PC-3 (cell line): ENCODE measurements at regions of chr1 and their contacts with region 1.

Region 1: GRCh38 chr1:19096036-19096833 is 113.8 kb downstream of the UBR4 start:
- DNase-seq: peak; percentile 74
- ATAC-seq: peak; percentile 97
- H3K4me3 ChIP-seq: no peak overlapping the region
- H3K27ac ChIP-seq: no peak overlapping the region
- H3K4me1 ChIP-seq: no peaks in the 10 kb centered on the region
- H3K27me3 ChIP-seq: no peaks in the 10 kb centered on the region
- CTCF ChIP-seq: peak; percentile 82

Region 2: GRCh38 chr1:18883636-18884418 is 212.4 kb before region 1 on chr1:
- CTCF ChIA-PET with region 1: interaction called, 3 read pairs
- POLR2A ChIA-PET with region 1: no interaction called
- intact Hi-C with region 1: loop called (anchors 1 kb)
- DNase-seq: peak; percentile 81
- ATAC-seq: peak; percentile 92
- H3K4me3 ChIP-seq: no peak overlapping the region
- H3K27ac ChIP-seq: no peak overlapping the region
- H3K4me1 ChIP-seq: no peaks in the 10 kb centered on the region
- H3K27me3 ChIP-seq: no peaks in the 10 kb centered on the region
- CTCF ChIP-seq: peak; percentile 91